AG04449 (cell line): ENCODE measurements at regions of chr19 and their contacts with region 1.

Region 1: DNA sequence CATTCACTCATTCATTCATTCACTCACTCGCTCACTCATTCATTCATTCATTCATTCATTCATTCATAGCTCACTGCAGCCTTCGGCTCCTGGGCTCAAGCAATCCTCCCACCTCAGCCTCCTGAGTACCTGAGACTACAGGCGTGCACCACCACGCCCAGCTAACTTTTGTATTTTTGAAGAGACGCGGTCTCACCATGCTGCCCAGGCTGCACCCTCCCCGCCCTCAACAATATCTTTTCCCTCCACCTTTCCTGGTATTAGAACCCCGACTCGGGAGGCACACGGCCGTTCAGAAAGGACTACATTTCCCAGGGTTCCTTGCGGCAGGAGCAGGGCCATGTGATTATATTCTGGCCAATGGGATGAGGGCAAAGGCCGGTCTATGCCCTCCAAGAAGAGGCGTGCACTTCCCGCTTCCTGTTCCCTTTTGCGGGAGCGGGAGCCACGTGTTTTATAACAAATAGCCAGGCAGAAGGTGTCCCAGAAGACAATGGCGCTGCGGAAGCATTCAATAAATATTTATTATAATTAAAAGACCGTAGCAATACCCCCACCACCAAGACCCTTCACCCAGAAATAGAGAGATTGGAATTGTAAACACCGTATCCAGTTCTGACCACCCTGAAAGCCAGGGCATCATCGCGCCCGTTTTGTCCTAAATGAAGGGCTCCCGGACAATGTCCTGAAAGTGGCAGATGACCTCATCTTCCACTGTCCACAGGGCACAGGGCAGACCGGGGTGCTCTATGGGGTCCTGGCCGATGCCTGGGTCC is 15.9 kb downstream of the TICAM1 start:
- DNase-seq: no peak
- H3K4me3 ChIP-seq: no peak overlapping the region
- CTCF ChIP-seq: no peak

Region 2: DNA sequence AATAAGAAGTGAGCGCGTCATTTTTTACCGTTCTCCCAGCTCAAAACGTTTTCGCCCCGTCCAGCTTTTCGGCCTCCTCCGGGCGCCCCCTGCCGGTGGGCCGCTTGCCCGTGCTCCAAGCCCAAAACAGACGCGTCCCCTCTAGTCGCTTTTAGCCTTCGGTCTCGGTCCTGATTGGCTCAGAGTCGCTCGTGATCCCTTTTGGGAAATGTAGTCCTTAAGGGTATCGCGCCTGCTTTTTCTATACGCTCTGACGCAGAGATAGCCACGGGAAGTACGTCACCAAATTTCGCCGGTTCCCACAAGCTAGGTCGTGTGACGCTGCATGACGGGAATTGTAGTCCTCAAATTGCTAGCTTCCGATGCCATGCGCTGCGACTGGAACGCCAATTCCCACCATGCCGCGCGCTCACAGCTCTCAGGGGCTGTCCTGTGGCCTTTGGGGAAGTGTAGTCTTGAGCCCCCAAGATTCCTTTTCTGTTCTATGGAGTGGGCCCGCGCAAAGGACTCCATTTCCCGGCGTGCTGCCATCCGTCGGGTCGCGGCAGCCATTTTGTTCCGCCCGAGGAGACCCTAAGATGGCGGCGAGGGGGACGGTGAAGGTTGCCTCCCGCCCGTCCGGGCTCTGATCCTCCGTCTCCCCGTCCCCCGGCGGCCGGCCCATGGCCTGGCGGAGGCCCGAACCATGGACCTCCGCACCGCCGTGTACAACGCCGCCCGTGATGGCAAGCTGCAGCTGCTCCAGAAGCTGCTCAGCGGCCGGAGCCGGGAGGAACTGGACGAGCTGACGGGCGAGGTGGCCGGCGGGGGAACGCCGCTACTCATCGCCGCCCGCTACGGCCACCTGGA is 24.2 kb before region 1 on chr19 and contains the start of gene FEM1A:
- CTCF ChIA-PET with region 1: interaction called, 22 read pairs
- POLR2A ChIA-PET with region 1: interaction called, 3 read pairs
- DNase-seq: peak; percentile 100
- H3K4me3 ChIP-seq: peak within 1 kb of the TSS; percentile 76
- CTCF ChIP-seq: peak; percentile 97

Region 3: GRCh38 chr19:4851551-4852290 is 36.1 kb after region 1 on chr19:
- CTCF ChIA-PET with region 1: interaction called, 336 read pairs
- POLR2A ChIA-PET with region 1: no interaction called
- DNase-seq: no peak
- H3K4me3 ChIP-seq: no peak overlapping the region
- CTCF ChIP-seq: peak; percentile 89

Region 4: GRCh38 chr19:4939466-4939865 is 123.9 kb after region 1 on chr19:
- CTCF ChIA-PET with region 1: interaction called, 12 read pairs
- POLR2A ChIA-PET with region 1: no interaction called
- DNase-seq: no peak
- H3K4me3 ChIP-seq: no peak overlapping the region
- CTCF ChIP-seq: no peak

Region 5: GRCh38 chr19:5001615-5002014 is 186.0 kb after region 1 on chr19:
- CTCF ChIA-PET with region 1: interaction called, 12 read pairs
- POLR2A ChIA-PET with region 1: no interaction called
- DNase-seq: no peak
- H3K4me3 ChIP-seq: no peak overlapping the region
- CTCF ChIP-seq: peak; percentile 77

Region 6: DNA sequence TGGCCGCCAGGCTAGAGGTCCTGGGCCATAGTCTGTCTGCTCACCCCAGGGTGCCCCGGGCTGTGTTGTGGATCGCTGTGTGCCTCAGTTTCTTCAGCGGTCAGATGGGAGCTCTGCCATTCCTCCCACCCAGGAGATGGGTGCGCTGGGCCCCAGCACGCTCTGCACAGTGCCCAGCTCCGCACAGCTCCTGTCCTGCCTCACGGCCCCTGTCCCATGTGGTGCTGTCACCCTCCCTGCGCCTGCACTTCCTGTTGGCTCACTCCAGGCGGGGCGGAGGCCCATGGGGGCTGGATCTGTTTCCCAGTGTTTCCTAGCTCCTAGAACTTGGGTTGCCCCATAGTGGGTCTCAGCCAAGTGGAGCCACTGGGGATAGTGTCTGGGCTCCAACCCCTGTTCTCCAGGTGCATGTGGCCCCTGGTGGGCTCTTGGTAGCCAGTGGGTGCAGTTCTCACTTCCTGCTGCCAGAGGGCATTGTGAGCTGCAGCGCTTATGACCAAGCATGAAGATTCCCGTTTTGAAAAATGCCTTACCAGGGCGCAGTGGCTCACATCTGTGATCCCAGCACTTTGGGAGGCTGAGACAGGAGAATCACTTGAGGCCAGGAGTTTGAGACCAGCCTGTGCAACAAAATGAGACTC is 223.1 kb after region 1 on chr19:
- CTCF ChIA-PET with region 1: interaction called, 246 read pairs
- POLR2A ChIA-PET with region 1: interaction called, 4 read pairs
- DNase-seq: no peak
- H3K4me3 ChIP-seq: no peak overlapping the region
- CTCF ChIP-seq: peak; percentile 60